Activated CD4-positive, alpha-beta T cell treated with anti-CD3 and anti-CD28 coated beads, Interleukin-2, amount 10 ng/mL, durations not matched to agents 7 days and 5 days (primary cell): ENCODE measurements at regions of chr14 and their contacts with region 1.

Region 1: GRCh38 chr14:77301103-77301502 is 19.6 kb downstream of the POMT2 start:
- DNase-seq: peak; percentile 74
- H3K4me3 Mint-ChIP-seq: no peak overlapping the region
- H3K27ac Mint-ChIP-seq: no peak overlapping the region
- H3K4me1 Mint-ChIP-seq: peaks cover 17% of the 10 kb centered on the region
- H3K27me3 Mint-ChIP-seq: no peaks in the 10 kb centered on the region

Region 2: GRCh38 chr14:77151918-77152588 is 149.1 kb before region 1 on chr14:
- CTCF ChIA-PET with region 1: no interaction called
- POLR2A ChIA-PET with region 1: no interaction called
- DNase-seq: no peak
- H3K4me3 Mint-ChIP-seq: no peak overlapping the region
- H3K27ac Mint-ChIP-seq: no peak overlapping the region
- H3K4me1 Mint-ChIP-seq: no peaks in the 10 kb centered on the region
- H3K27me3 Mint-ChIP-seq: peaks cover 25% of the 10 kb centered on the region

Region 3: GRCh38 chr14:77275601-77276017 is 25.5 kb before region 1 on chr14:
- CTCF ChIA-PET with region 1: no interaction called
- POLR2A ChIA-PET with region 1: no interaction called
- DNase-seq: no peak
- H3K4me3 Mint-ChIP-seq: no peak overlapping the region
- H3K27ac Mint-ChIP-seq: no peak overlapping the region
- H3K4me1 Mint-ChIP-seq: no peaks in the 10 kb centered on the region
- H3K27me3 Mint-ChIP-seq: peaks cover 16% of the 10 kb centered on the region

Region 4: GRCh38 chr14:77314043-77314442 is 12.9 kb after region 1 on chr14:
- CTCF ChIA-PET with region 1: interaction called, 83 read pairs
- POLR2A ChIA-PET with region 1: interaction called, 3 read pairs
- DNase-seq: no peak
- H3K4me3 Mint-ChIP-seq: no peak overlapping the region
- H3K27ac Mint-ChIP-seq: no peak overlapping the region
- H3K4me1 Mint-ChIP-seq: peaks cover 4% of the 10 kb centered on the region
- H3K27me3 Mint-ChIP-seq: no peaks in the 10 kb centered on the region